ENCODE measurements at regions of chr12 and their contacts with region 1.

Region 1: DNA sequence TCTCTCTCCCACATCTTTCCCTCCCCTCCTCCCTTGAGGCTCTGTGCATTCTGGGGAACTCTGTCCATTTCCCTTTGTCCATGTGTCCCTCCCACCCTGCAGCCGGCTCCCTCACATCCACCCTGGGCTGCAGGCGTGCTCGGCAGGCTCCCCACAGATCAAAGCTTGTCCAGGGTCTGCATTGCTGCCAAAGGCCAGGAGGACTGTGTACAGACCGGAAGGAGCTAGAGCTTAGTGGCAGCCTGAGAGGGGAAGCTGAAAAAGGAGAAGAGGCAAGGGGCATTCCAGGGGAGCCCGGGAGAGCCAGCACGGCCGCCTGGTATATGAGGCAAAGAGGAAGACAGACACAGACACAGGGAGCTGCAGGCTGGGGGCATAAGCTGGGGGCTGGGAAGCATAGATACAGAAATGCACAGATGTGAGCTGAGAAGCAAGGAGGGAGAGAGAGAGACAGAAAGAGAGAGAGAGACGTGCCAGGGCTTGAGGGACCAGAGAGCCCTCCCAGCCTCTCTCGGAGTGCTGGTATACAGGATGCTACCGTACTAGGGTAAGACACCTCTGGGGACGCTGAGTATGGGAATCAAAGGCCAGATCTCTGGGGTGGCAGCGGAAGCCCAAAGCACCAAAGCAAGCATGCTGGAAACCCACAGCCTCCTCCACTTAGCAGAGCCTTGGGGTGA is 3.3 kb downstream of the CD4 start:
- DNase-seq: peak; percentile 36 to 86 (median 83)
- H3K4me3 ChIP-seq: peak overlapping the region in 5 of 7 experiments; percentile 6 to 46 (median 29)
- H3K27ac ChIP-seq: no peak overlapping the region
- H3K4me1 ChIP-seq: peaks cover 0 to 42% (median 35%) of the 10 kb centered on the region in 4 experiments
- H3K27me3 ChIP-seq: no peaks in the 10 kb centered on the region

Region 2: GRCh38 chr12:6778574-6779550 is 13.8 kb before region 1 on chr12:
- CTCF ChIA-PET with region 1: interaction called, 38 read pairs
- POLR2A ChIA-PET with region 1: no interaction called
- DNase-seq: peak; percentile 86 to 93 (median 90)
- H3K4me3 ChIP-seq: peak overlapping the region; percentile 5 to 70 (median 62)
- H3K27ac ChIP-seq: no peak overlapping the region
- H3K4me1 ChIP-seq: peaks cover 0 to 28% (median 19%) of the 10 kb centered on the region in 4 experiments
- H3K27me3 ChIP-seq: peaks cover 0 to 13% (median 0%) of the 10 kb centered on the region in 5 experiments

Region 3: GRCh38 chr12:6807170-6807569 is 14.5 kb after region 1 on chr12:
- CTCF ChIA-PET with region 1: interaction called, 10 read pairs
- POLR2A ChIA-PET with region 1: no interaction called
- DNase-seq: no peak
- H3K4me3 ChIP-seq: no peak overlapping the region
- H3K27ac ChIP-seq: no peak overlapping the region
- H3K4me1 ChIP-seq: no peaks in the 10 kb centered on the region
- H3K27me3 ChIP-seq: no peaks in the 10 kb centered on the region

Region 4: GRCh38 chr12:6840330-6840729 is 47.7 kb after region 1 on chr12:
- CTCF ChIA-PET with region 1: no interaction called
- POLR2A ChIA-PET with region 1: no interaction called
- DNase-seq: peak in 2 of 3 donors; percentile 25 to 50
- H3K4me3 ChIP-seq: no peak overlapping the region
- H3K27ac ChIP-seq: no peak overlapping the region
- H3K4me1 ChIP-seq: peaks cover 0 to 2% (median 0%) of the 10 kb centered on the region in 4 experiments
- H3K27me3 ChIP-seq: no peaks in the 10 kb centered on the region

Region 5: DNA sequence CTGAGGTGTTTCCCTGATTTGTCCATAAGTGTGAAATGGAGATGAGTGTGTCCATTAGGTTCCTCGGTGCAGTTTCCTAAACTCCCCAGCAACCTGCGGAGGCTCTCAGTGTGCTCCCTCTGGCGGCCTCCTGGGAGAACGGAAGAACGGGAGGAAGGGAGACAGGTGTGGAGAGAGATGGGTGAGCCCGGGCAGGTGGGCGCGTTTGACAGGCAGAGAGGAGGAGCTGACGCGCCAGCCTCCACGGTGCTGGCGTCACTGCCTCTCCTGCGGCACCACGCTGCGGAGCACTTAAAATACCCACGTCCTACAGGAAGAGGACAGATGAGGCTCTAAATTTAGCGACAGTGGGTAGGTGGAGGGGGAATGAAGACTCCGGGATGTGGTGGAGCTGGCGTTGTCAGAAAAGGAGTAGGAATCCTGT is 370.0 kb after region 1 on chr12:
- CTCF ChIA-PET with region 1: no interaction called
- POLR2A ChIA-PET with region 1: no interaction called
- DNase-seq: peak; percentile 15 to 42 (median 39)
- H3K4me3 ChIP-seq: peak overlapping the region in 3 of 7 experiments; percentile 34 to 58 (median 40)
- H3K27ac ChIP-seq: no peak overlapping the region
- H3K4me1 ChIP-seq: peaks cover 0 to 8% (median 1%) of the 10 kb centered on the region in 4 experiments
- H3K27me3 ChIP-seq: peaks cover 0 to 10% (median 0%) of the 10 kb centered on the region in 5 experiments

Measured in common myeloid progenitor, CD34-positive (primary cell).